PC-9 (cell line): ENCODE measurements at regions of chr12 and their contacts with region 1.

Region 1: DNA sequence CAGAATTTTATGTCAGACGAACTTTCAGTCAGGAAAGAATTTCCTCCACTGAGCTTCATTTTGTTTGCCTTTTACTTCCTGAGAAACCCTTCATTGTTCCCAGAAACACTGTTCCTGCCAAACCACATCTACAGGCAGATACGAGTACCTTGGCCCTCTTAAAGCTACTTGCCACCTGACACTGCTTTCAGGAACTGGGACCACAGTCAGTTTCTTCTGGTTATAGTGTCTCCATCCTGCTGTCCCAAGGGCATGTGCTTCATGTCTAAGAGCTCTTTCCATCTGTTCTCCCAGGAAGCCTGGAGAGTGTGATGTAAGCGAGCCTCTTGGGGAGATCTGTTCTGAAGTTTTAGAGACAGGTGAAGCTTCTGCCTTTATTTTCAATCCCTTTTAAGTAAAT is 161.7 kb upstream of the PLEKHA5 start:
- DNase-seq: no peak
- H3K4me3 ChIP-seq: no peak overlapping the region
- H3K27ac ChIP-seq: no peak overlapping the region
- H3K4me1 ChIP-seq: peaks cover 6% of the 10 kb centered on the region; the same call in 1 of the 2 replicates
- H3K27me3 ChIP-seq: no peaks in the 10 kb centered on the region
- CTCF ChIP-seq: no peak

Region 2: DNA sequence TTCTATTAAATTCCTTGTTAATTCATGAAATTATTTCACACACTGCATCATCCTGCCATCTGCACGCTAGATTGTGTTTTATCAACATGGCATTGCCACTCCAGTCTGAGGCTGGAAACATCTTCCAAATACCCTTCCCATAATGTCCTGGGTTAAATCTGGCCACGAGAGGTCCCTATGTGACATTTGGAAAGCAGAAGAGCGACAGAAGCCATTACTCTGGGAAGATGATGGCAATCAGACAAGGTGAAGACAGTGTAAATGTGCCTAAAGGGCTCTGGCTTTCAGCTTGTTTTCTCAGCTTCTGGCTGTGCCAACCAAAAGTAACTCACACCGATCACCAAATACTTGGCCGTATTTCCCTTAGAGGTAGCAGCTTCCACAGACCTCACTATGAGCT is 85.1 kb before region 1 on chr12:
- CTCF ChIA-PET with region 1: no interaction called
- POLR2A ChIA-PET with region 1: interaction called, 14 read pairs
- intact Hi-C with region 1: no loop called
- DNase-seq: no peak
- H3K4me3 ChIP-seq: no peak overlapping the region
- H3K27ac ChIP-seq: no peak overlapping the region
- H3K4me1 ChIP-seq: no peaks in the 10 kb centered on the region
- H3K27me3 ChIP-seq: no peaks in the 10 kb centered on the region
- CTCF ChIP-seq: no peak

Region 3: GRCh38 chr12:19066475-19067001 is 98.7 kb after region 1 on chr12:
- CTCF ChIA-PET with region 1: interaction called, 16 read pairs
- POLR2A ChIA-PET with region 1: no interaction called
- intact Hi-C with region 1: no loop called
- DNase-seq: no peak
- H3K4me3 ChIP-seq: no peak overlapping the region
- H3K27ac ChIP-seq: no peak overlapping the region
- H3K4me1 ChIP-seq: no peaks in the 10 kb centered on the region
- H3K27me3 ChIP-seq: no peaks in the 10 kb centered on the region
- CTCF ChIP-seq: no peak